ENCODE measurements at regions of chr20 and their contacts with region 1.

Region 1: DNA sequence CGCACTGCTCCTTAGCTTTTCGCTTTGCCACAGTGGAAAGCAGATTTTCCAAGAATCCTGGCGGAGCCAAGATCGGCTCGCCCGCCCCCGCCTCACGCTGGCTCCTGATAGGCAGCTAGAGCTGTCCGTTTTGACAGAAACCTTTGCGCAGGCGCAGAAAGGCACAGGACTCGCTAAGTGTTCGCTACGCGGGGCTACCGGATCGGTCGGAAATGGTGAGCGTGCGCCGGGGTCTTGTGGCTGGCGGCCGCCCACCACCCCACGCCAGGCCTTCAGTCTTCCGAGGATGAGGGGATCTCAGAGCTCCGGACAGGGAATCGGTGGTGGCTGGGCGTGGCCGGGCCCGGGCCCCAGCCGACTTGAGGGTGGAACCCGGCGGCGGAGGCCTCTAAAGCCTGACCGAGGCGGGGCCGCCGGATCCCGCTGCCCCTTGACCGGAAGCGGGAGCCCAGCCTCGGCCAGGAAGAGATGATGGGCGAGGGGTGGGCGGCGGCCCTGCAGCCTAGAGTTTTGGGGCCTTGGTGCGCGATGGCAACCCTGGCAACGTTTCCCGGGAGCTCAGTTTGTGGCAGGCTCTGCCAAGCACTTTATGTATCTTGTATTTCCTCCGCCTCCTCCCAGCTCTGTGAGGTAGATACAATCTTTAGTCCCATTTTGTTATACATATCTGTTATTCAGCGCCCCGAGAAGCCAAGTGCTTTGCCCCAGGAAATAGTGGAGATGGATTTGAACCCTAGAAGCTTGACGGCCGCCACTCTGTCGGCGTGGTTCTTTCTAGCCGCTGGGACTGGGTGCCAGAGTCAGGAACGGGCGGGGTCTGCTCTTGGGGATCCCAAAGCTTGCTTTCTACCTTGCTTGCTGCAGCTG is at the start of gene DYNLRB1:
- DNase-seq: peak; percentile 94 to 97 (median 95)
- ATAC-seq: peak; percentile 94
- H3K4me3 ChIP-seq: peak within 1 kb of the TSS; percentile 67
- H3K27ac ChIP-seq: peak within 1 kb of the TSS; percentile 80
- H3K4me1 ChIP-seq: peaks cover 12 to 18% of the 10 kb centered on the region in 2 experiments; a peak in 4 of 5 replicates
- H3K27me3 ChIP-seq: no peaks in the 10 kb centered on the region
- CTCF ChIP-seq: no peak; a peak in 1 of 6 replicates
- EP300 ChIP-seq: no peak
- POLR2A ChIP-seq: peak; percentile 91
- RAD21 ChIP-seq: no peak
- polyA plus RNA-seq, gene DYNLRB1: 172 to 191 TPM

Region 2: GRCh38 chr20:34302723-34303528 is 213.6 kb before region 1 on chr20 and contains the start of gene AHCY:
- CTCF ChIA-PET with region 1: no interaction called
- POLR2A ChIA-PET with region 1: interaction called, 8 read pairs
- in situ Hi-C with region 1: loop called (anchors 5 kb)
- intact Hi-C with region 1: no loop called
- DNase-seq: peak; percentile 89 to 99 (median 91)
- ATAC-seq: peak; percentile 97
- H3K4me3 ChIP-seq: peak within 1 kb of the TSS; percentile 96
- H3K27ac ChIP-seq: peak within 1 kb of the TSS; percentile 92
- H3K4me1 ChIP-seq: peaks cover 22 to 34% of the 10 kb centered on the region in 2 experiments
- H3K27me3 ChIP-seq: no peaks in the 10 kb centered on the region
- CTCF ChIP-seq: no peak
- EP300 ChIP-seq: no peak
- POLR2A ChIP-seq: peak; percentile 91
- RAD21 ChIP-seq: no peak
- polyA plus RNA-seq, gene AHCY: 82.5 to 148 TPM

Region 3: DNA sequence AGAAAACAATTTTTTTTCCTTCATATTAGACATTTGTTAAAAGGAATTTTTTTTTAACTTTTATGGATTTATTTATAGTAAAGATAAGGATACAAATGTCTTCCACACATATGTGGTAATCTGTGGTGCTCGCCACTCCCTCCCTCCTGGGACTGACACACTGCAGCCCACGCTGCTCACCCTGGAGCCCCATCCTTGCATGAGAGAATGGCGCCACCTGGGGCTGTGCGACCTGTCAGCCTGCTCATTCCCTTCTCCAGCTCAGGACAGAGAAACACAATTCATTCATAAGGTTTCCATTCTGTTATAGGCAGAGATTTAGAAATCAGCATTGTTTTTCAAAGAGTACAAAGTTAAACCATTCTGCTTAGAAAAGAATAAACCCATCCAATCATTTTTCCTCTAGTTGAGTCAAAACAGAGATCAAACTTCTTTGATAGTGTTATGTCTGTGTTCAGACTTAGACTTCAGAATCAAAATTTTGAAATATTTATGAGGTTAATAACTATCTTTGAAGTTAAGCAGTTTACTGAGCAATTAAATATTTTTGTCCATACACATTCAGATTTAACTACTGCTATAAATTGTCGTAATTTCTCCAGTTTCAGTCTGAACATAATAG is 43.1 kb before region 1 on chr20:
- CTCF ChIA-PET with region 1: no interaction called
- POLR2A ChIA-PET with region 1: interaction called, 3 read pairs
- in situ Hi-C with region 1: no loop called
- intact Hi-C with region 1: loop called (anchors 5 kb)
- DNase-seq: peak; percentile 32 to 68 (median 44)
- ATAC-seq: peak; percentile 99
- H3K4me3 ChIP-seq: no peak overlapping the region
- H3K27ac ChIP-seq: no peak overlapping the region
- H3K4me1 ChIP-seq: peaks cover 0 to 4% of the 10 kb centered on the region in 2 experiments; a peak in 4 of 5 replicates
- H3K27me3 ChIP-seq: no peaks in the 10 kb centered on the region
- CTCF ChIP-seq: peak; percentile 53 to 66 (median 65)
- EP300 ChIP-seq: no peak
- POLR2A ChIP-seq: no peak
- RAD21 ChIP-seq: peak; percentile 69 to 84

Measured in K562 (cell line).